ENCODE measurements at regions of chr6 and their contacts with region 1.

Region 1: GRCh38 chr6:110537208-110538123 is 61.1 kb upstream of the SLC22A16 start:
- DNase-seq: no peak
- H3K4me3 ChIP-seq: no peak overlapping the region
- H3K27ac ChIP-seq: peak overlapping the region; percentile 52 to 76
- H3K4me1 ChIP-seq: peaks cover 3 to 11% of the 10 kb centered on the region in 2 donors
- H3K27me3 ChIP-seq: no peaks in the 10 kb centered on the region
- CTCF ChIP-seq: no peak
- POLR2A ChIP-seq: no peak

Region 2: DNA sequence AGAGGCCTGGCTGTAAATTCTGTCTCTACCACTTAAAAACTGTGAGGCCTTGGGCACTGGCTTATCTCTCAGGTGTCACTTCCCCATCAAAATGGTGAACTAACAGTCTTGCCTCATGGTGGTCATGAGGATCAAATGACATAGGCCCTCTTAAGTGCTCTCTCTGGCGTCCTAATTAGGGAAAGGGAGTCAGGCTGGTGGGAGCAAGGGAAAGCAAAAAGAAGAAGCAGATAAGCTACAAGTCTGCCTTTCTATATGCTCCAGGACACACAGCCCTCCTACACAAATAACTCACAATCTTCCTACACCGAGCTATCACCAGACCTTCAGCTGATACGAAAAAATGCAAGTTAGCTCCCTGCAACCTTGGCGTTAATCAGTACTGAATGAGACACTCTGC is 41.5 kb before region 1 on chr6:
- intact Hi-C with region 1: loop called (anchors 2 kb)
- DNase-seq: no peak
- H3K4me3 ChIP-seq: no peak overlapping the region
- H3K27ac ChIP-seq: no peak overlapping the region
- H3K4me1 ChIP-seq: no peaks in the 10 kb centered on the region
- H3K27me3 ChIP-seq: no peaks in the 10 kb centered on the region
- CTCF ChIP-seq: no peak
- POLR2A ChIP-seq: no peak

Region 3: DNA sequence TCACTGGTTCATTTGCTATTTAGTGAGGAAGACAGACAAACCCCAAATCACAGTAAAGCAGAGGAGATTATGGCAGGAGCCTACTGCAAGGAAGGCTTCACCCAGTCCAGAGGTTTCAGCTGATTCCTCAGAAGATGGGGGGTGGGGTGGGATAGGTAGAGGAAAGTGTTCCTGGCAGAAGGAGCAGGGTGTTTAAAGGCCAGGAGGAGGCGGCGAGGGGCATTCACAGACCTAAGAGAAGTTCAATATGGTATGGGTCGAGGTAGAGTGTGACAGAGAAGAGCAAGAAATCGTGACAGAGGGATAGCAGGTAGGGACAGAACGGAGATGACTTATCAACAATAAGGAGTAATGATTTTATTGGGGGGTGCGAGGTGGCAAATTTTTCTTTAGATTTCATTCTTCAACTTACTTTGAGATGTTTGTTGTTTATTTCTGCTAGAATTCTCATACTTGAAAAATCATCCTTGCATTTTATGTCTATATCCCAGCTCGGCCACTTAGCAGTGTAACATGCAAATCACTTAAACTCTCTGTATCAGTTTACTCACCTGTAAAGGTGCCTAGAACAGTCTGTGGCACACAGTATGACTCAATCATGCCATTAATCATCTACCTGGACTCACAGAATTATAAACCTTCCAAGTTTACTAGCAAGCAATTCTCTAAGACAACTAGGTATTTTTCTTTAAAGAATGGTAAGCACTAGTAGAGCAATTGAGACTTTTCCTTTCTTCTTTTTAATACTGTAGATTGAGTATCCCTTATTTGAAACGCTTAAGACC is 768.8 kb after region 1 on chr6:
- intact Hi-C with region 1: no loop called
- DNase-seq: no peak
- H3K4me3 ChIP-seq: no peak overlapping the region
- H3K27ac ChIP-seq: no peak overlapping the region
- H3K4me1 ChIP-seq: no peaks in the 10 kb centered on the region
- H3K27me3 ChIP-seq: no peaks in the 10 kb centered on the region
- CTCF ChIP-seq: no peak
- POLR2A ChIP-seq: no peak

Region 4: DNA sequence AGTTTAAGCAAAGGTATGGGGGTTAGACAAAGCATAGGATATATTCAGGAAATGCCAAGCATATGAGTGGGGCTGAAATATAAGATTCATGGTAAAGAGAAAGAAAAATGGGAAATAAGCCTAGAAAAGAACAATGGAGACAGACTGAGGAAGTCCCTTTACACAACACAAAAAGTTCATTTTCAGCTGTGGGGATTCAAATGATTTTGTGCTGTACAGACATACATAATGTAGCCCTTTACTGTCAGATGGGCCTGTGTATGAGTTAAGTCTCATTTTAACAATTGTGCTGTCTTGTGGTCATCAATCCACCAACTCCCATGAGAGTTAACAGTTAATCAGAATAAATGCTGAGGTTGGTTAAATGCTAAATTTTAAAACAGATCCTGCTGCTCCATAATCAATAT is 908.4 kb after region 1 on chr6:
- intact Hi-C with region 1: loop called (anchors 5 kb)
- DNase-seq: no peak
- H3K4me3 ChIP-seq: no peak overlapping the region
- H3K27ac ChIP-seq: no peak overlapping the region
- H3K4me1 ChIP-seq: peaks cover 0 to 4% of the 10 kb centered on the region in 2 donors
- H3K27me3 ChIP-seq: no peaks in the 10 kb centered on the region
- CTCF ChIP-seq: no peak
- POLR2A ChIP-seq: no peak